H1 (cell line): ENCODE measurements at regions of chr1 and their contacts with region 1.

Region 1: GRCh38 chr1:67760030-67760821 is 73.0 kb downstream of the GNG12 start:
- DNase-seq: peak in 1 of 2 experiments; percentile 74
- H3K4me3 ChIP-seq: no peak overlapping the region
- H3K27ac ChIP-seq: no peak overlapping the region
- H3K4me1 ChIP-seq: no peaks in the 10 kb centered on the region
- H3K27me3 ChIP-seq: no peaks in the 10 kb centered on the region; a peak in 1 of 7 replicates
- CTCF ChIP-seq: peak; percentile 59 to 84 (median 61)
- EP300 ChIP-seq: no peak
- POLR2A ChIP-seq: no peak
- RAD21 ChIP-seq: peak; percentile 88

Region 2: DNA sequence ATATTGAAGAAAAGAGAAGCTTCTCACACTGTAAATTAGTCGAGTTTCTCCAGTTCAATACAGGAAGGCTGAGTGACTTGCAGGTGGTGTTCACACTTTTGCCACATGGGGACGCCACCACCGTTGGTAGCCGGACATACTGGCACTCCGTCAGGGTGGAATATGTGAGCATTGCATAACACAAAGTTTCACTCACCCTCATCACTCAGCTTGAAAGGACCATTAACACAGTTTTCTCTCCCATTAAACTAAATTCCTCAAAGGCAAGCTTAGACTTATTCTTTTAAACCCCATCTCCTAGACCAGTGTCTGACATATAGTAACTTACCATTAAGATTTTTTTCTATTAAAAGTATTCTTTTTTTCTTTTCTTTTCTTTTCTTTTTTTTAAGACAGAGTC is 224.8 kb before region 1 on chr1:
- CTCF ChIA-PET with region 1: interaction called, 161 read pairs
- POLR2A ChIA-PET with region 1: interaction called, 3 read pairs
- DNase-seq: peak; percentile 41 to 86
- H3K4me3 ChIP-seq: no peak overlapping the region
- H3K27ac ChIP-seq: no peak overlapping the region
- H3K4me1 ChIP-seq: no peaks in the 10 kb centered on the region
- H3K27me3 ChIP-seq: no peaks in the 10 kb centered on the region
- CTCF ChIP-seq: peak; percentile 90 to 98 (median 97)
- EP300 ChIP-seq: no peak
- POLR2A ChIP-seq: no peak
- RAD21 ChIP-seq: peak; percentile 90 to 94

Region 3: DNA sequence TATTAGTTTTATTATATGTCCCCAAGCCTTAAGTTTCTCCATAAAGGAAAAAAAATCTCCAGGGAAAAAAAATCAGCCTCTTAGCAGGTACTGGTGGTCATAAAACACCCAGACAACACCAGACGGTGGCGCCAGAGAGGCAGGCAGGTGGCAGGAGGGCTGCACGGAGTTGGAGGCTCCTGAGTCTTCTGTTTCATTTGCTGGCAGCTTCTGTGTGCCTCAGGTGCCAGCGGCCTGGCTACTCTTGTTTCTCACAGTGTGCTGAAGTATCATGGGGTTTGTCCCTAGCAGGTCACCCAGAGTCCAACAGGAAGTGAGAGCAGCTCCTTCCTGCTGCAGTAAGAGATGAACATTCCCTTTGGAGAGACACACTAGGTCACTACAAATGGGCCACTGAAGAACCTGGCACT is 198.5 kb before region 1 on chr1:
- CTCF ChIA-PET with region 1: interaction called, 146 read pairs
- POLR2A ChIA-PET with region 1: no interaction called
- DNase-seq: peak; percentile 54 to 98
- H3K4me3 ChIP-seq: no peak overlapping the region
- H3K27ac ChIP-seq: no peak overlapping the region
- H3K4me1 ChIP-seq: no peaks in the 10 kb centered on the region
- H3K27me3 ChIP-seq: no peaks in the 10 kb centered on the region
- CTCF ChIP-seq: peak; percentile 86 to 92 (median 91)
- EP300 ChIP-seq: no peak
- POLR2A ChIP-seq: no peak
- RAD21 ChIP-seq: peak; percentile 94 to 95

Region 4: DNA sequence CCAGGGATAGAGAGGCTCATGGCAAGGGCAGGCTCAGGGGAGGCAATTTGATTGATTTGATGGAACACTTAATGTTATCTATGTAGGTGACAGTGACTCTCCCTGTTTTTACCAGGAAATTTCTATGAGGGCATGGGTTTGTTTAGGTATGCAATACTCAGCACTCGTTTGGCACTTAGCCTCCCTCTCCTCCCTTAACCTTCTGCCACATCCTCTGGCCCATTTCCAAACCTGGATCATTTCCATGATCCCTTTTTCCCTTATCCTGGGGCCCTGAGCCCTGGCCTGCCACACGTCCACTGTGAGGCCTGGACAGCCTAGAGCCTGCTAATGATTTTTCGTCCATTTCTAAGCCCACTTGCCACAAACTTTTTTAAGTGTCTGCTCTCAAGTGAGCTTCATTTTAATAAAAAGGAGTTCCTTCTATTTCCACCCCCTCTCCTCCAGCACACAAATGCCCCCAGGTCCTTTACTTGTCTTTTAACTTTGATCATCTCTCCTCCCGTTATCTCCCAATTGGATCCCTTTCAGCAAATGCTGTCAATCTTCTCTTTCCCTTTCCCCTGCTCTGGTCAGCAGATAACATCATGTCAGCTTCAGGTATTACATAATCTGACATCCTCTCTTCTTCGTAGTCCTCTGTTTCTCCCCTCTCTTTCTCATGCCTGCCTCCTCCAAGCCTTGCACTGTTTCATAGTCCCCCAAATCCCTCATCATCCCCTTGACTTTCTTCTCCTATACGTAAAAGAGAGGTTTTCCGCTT is 113.0 kb before region 1 on chr1:
- CTCF ChIA-PET with region 1: interaction called, 12 read pairs
- POLR2A ChIA-PET with region 1: no interaction called
- DNase-seq: no peak
- H3K4me3 ChIP-seq: no peak overlapping the region
- H3K27ac ChIP-seq: no peak overlapping the region
- H3K4me1 ChIP-seq: no peaks in the 10 kb centered on the region; a peak in 1 of 7 replicates
- H3K27me3 ChIP-seq: no peaks in the 10 kb centered on the region
- CTCF ChIP-seq: no peak
- EP300 ChIP-seq: no peak
- POLR2A ChIP-seq: no peak
- RAD21 ChIP-seq: no peak

Region 5: GRCh38 chr1:67691712-67692111 is 68.5 kb before region 1 on chr1:
- CTCF ChIA-PET with region 1: interaction called, 14 read pairs
- POLR2A ChIA-PET with region 1: interaction called, 3 read pairs
- DNase-seq: no peak
- H3K4me3 ChIP-seq: no peak overlapping the region
- H3K27ac ChIP-seq: no peak overlapping the region
- H3K4me1 ChIP-seq: peaks cover 0 to 5% (median 2%) of the 10 kb centered on the region in 4 experiments; a peak in 3 of 7 replicates
- H3K27me3 ChIP-seq: no peaks in the 10 kb centered on the region
- CTCF ChIP-seq: no peak
- EP300 ChIP-seq: no peak
- POLR2A ChIP-seq: no peak
- RAD21 ChIP-seq: no peak

Region 6: DNA sequence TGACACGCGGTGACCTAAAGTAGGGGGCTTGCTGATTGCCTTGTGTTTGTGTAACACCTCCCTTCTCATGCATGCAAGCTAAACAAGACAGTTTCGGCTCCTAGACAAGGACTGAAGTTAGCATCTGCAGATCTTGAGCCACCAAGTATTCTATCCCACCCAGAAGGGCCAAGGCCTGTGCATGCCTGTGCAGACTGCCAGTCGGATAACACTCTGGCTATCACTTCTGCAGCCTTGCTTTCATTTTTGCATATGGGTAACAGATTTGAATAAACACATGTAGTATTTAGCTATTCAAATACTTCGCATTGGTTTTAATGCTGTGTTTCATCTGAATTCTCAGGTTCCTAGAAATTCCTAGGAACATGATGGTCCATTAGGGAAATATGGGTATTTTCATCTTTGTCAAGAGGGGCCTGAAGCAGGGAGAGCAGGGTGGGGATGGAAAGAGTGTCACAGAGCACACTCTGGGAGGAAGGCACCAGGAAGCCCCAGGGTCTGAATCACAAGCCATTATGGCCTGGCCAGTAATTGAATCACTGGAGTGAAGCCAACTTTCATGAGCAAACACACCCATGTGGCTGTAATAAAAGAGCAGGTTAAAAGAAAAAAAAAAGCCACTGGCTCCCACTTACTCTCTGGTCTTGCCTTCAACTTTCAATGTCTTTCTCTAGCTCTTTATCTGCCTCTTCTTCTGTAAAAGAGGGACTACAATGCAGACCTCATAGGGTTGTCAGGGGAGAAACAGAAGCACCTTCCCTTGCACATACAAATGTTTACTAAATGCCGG is 47.0 kb before region 1 on chr1:
- CTCF ChIA-PET with region 1: interaction called, 40 read pairs
- POLR2A ChIA-PET with region 1: no interaction called
- DNase-seq: no peak
- H3K4me3 ChIP-seq: no peak overlapping the region
- H3K27ac ChIP-seq: no peak overlapping the region
- H3K4me1 ChIP-seq: peaks cover 0 to 4% (median 0%) of the 10 kb centered on the region in 4 experiments; a peak in 1 of 7 replicates
- H3K27me3 ChIP-seq: no peaks in the 10 kb centered on the region
- CTCF ChIP-seq: no peak
- EP300 ChIP-seq: no peak
- POLR2A ChIP-seq: no peak
- RAD21 ChIP-seq: no peak

Region 7: DNA sequence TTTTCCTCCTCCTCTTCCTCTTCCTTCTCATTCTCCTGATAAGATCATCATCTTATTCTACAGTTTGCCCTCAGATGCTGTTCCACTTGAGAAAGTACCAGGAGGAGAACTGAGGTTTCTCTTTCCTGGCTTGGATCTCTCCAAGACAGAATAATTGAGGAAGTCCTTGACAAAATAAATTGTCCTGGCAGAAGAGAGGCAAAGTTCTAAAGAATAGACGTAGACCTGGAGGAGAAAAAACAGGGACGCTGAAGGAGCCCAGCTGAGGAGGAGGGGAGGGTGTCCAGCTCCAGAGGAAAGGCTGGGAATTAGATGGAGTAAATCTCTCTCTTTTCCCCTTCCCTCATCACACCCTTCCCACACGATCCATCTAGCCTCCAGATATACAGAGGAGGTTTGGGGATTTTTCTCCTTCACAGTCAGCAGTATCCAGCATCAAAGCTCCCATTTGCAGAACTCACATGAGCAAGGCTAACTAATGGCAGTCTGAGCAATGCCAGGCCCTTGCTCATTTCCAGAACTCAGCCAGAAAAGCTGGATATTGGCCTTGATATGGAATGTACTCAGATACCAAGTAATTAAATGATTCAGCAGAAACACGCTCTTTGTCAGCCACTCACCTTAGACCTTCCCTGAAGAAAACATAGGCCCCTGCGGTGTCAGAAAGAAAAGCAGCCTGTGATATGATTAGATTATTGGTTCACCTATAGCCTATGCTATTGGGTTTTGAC is 78.1 kb after region 1 on chr1:
- CTCF ChIA-PET with region 1: interaction called, 34 read pairs
- POLR2A ChIA-PET with region 1: no interaction called
- DNase-seq: no peak
- H3K4me3 ChIP-seq: no peak overlapping the region
- H3K27ac ChIP-seq: no peak overlapping the region
- H3K4me1 ChIP-seq: peaks cover 8 to 26% (median 24%) of the 10 kb centered on the region in 4 experiments; a peak in 6 of 7 replicates
- H3K27me3 ChIP-seq: peaks cover 3 to 15% (median 12%) of the 10 kb centered on the region in 4 experiments; a peak in 5 of 7 replicates
- CTCF ChIP-seq: no peak
- EP300 ChIP-seq: no peak
- POLR2A ChIP-seq: no peak
- RAD21 ChIP-seq: no peak

Region 8: GRCh38 chr1:67921725-67922489 is 161.7 kb after region 1 on chr1:
- CTCF ChIA-PET with region 1: no interaction called
- POLR2A ChIA-PET with region 1: no interaction called
- DNase-seq: no peak
- H3K4me3 ChIP-seq: no peak overlapping the region
- H3K27ac ChIP-seq: no peak overlapping the region
- H3K4me1 ChIP-seq: no peaks in the 10 kb centered on the region
- H3K27me3 ChIP-seq: no peaks in the 10 kb centered on the region
- CTCF ChIP-seq: no peak
- EP300 ChIP-seq: no peak
- POLR2A ChIP-seq: no peak
- RAD21 ChIP-seq: no peak